ENCODE measurements at regions of chr6 and their contacts with region 1.

Region 1: DNA sequence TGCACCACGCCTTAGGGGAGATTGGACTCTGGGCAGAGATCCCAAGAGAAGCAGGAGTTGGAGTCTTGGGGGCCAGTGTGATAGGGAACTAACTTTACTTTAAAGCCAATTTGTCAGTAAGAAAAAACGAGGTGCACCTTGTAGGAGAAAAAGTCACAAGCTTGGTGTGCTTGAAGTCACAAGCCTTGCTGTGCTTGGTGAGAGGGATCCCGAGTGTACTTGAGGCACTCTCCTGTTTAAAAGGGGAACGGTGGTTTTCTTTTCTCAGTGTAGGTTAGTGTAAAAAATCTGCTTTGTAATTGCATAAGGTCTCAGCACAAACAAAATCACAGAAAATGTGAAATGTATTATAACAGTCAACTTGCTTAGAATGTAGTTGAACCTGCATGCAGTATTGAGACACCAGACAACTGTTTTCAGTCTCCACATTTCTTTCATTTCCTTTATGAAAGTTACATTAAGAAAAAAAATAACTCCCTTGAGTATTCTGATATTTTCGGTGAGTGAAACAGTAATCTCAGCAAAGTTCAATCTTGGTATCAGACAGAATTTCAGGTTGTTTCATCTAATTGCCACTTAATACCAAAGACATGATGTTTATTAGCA is 111.1 kb upstream of the DUSP22 start:
- DNase-seq: no peak
- H3K4me3 ChIP-seq: no peak overlapping the region
- H3K27ac ChIP-seq: no peak overlapping the region
- H3K4me1 ChIP-seq: no peaks in the 10 kb centered on the region
- H3K27me3 ChIP-seq: peaks cover 68% of the 10 kb centered on the region; the same call in 1 of the 2 replicates
- CTCF ChIP-seq: no peak
- EP300 ChIP-seq: no peak
- RAD21 ChIP-seq: no peak

Region 2: DNA sequence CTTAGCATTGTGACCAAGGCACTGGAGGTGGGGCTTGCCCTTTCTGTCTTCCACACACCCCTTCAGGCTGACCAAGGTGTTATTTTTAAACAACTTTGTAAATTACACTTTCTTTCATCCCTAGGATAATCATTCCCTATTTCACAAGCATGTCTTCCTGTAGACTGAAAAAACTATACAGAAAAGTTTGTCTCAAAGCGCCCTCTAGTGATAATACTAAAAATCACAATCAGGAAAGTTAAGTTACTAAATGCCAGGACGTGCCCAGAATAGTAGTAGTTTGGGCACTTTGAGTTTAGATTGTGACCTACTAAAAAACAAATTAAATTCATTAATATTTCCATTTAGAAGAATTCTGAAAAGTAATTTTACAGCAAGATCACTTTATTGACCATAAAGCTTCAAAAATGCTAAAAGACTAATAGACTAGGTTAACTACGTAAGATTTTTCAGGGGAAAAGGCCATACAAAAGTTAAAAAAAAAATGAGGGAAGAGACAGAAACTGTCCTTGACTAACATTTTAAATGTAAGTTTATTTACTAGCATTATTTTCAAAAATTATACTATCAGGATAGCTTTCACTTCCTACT is 12.2 kb before region 1 on chr6:
- CTCF ChIA-PET with region 1: interaction called, 10 read pairs
- POLR2A ChIA-PET with region 1: no interaction called
- DNase-seq: peak; percentile 42
- H3K4me3 ChIP-seq: no peak overlapping the region
- H3K27ac ChIP-seq: no peak overlapping the region
- H3K4me1 ChIP-seq: no peaks in the 10 kb centered on the region
- H3K27me3 ChIP-seq: peaks cover 19% of the 10 kb centered on the region
- CTCF ChIP-seq: peak; percentile 73
- EP300 ChIP-seq: no peak
- RAD21 ChIP-seq: peak; percentile 68

Region 3: DNA sequence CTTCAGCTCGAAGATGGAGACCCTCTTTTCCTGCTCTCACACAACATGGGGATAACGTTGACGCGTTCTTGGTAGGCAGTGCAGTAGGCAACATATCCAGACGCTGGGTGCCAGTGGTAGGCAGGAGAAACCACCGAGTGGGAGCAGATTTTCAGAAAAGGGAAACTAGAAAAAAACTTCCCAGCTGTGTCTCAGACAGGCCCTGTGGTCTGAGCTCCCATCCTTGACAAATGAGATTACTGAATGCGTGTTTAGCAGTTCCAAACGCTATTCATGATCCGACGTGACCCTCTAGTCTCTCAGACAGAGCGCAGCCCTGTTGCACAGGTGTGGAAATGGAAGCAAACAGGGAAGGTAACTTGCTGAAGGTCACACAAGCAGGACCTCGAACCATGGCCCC is 27.2 kb after region 1 on chr6:
- CTCF ChIA-PET with region 1: no interaction called
- POLR2A ChIA-PET with region 1: no interaction called
- DNase-seq: no peak
- H3K4me3 ChIP-seq: no peak overlapping the region
- H3K27ac ChIP-seq: no peak overlapping the region
- H3K4me1 ChIP-seq: no peaks in the 10 kb centered on the region
- H3K27me3 ChIP-seq: peaks cover 100% of the 10 kb centered on the region
- CTCF ChIP-seq: no peak
- EP300 ChIP-seq: no peak
- RAD21 ChIP-seq: no peak

Region 4: GRCh38 chr6:422433-423054 is 241.4 kb after region 1 on chr6:
- CTCF ChIA-PET with region 1: no interaction called
- POLR2A ChIA-PET with region 1: no interaction called
- DNase-seq: no peak
- H3K4me3 ChIP-seq: no peak overlapping the region
- H3K27ac ChIP-seq: no peak overlapping the region
- H3K4me1 ChIP-seq: peaks cover 0 to 4% of the 10 kb centered on the region in 2 experiments; a peak in 1 of 4 replicates
- H3K27me3 ChIP-seq: peaks cover 13% of the 10 kb centered on the region; the same call in 1 of the 2 replicates
- CTCF ChIP-seq: no peak
- EP300 ChIP-seq: no peak
- RAD21 ChIP-seq: no peak